Activated CD4-positive, alpha-beta T cell treated with anti-CD3 and anti-CD28 coated beads, Interleukin-2, amount 10 ng/mL, durations not matched to agents 24 days and 14 days (primary cell): ENCODE measurements at regions of chr10 and their contacts with region 1.

Region 1: DNA sequence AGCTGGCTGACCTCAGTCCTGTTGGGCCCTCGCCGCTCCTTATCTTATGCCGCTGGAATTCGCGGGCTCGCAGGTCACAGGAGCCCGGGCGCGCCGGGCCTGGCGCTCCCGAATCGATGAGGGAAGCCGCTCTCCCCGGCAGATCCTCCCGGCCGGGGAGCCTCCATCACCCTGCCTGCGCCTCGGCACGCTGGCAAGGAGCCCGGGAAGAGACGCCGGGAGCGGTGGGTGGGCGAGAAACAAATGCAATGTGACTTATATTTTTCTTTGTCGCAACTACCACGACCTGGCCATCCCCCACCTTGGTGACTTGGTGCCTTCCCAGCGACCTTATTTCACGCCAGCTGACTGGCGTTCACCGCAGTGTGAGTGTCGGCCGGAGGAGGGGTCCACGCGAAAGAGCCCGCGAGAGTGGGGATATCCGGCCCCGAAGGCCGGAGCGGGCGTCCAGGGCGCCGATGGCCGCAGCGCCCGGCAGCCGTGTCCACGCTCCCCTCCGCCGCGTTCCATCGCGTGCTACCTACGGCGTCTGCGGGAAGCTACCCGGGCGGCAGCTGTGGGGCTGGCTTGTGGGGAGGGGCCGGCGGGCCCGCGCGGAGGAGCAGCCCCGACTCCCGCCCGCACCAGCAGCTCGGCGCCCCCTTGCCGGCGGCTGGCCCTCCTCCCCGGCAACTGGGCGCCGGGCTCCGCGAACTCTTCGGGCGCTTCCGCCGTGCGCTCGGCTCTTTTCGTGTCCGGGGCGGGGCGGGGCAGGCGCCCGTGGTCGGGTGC is 494 bp upstream of the BMPR1A start:
- DNase-seq: peak; percentile 97
- H3K4me3 Mint-ChIP-seq: peak overlapping the region; percentile 85
- H3K27ac Mint-ChIP-seq: peak overlapping the region; percentile 86
- H3K4me1 Mint-ChIP-seq: peaks cover 40% of the 10 kb centered on the region
- H3K27me3 Mint-ChIP-seq: peaks cover 36% of the 10 kb centered on the region

Region 2: GRCh38 chr10:85724215-85724614 is 1031.7 kb before region 1 on chr10:
- intact Hi-C with region 1: no loop called
- DNase-seq: no peak
- H3K4me3 Mint-ChIP-seq: no peak overlapping the region
- H3K27ac Mint-ChIP-seq: no peak overlapping the region
- H3K4me1 Mint-ChIP-seq: no peaks in the 10 kb centered on the region
- H3K27me3 Mint-ChIP-seq: no peaks in the 10 kb centered on the region

Region 3: DNA sequence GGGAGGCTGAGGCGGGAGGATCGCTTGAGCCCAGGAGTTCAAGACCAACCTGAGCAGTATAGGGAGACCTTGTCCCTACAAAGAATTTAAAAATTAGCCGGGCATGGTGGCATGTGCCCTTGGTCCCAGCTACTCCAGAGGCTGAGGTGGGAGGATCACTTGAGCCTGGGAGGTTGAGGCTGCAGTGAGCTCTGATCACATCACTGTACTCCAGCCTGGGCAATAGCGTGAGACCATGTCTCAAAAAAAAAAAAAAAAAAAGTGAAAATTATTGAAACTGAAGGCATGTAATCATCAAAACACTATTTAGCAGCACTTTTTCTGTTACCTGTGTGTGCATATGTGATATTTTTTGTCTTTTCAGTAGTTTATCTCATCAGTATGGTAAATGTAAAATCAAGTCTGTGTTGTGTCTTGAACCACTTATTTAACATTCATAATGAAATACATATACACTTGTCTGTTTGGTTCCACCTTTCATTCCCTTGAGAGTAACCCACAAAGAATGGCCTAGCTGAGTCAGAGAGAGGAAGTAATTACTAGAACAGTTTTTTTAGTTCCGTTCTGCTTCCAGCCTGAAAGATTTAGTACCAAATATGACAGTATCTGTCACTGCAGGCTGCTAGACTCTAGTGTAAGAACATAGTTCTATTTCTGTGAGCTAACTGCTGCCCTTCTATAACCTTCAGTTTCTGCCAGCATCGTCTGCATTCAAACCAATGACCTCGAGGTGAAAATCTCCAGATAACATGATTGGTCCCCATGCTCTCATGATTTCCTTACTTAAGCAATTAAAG is 132.9 kb after region 1 on chr10:
- intact Hi-C with region 1: loop called (anchors 5 kb)
- DNase-seq: peak; percentile 60
- H3K4me3 Mint-ChIP-seq: no peak overlapping the region
- H3K27ac Mint-ChIP-seq: peak overlapping the region; percentile 69
- H3K4me1 Mint-ChIP-seq: peaks cover 6% of the 10 kb centered on the region
- H3K27me3 Mint-ChIP-seq: no peaks in the 10 kb centered on the region